Activated CD4-positive, alpha-beta T cell treated with anti-CD3 and anti-CD28 coated beads for 36 hours (primary cell): ENCODE measurements at regions of chr5 and their contacts with region 1.

Region 1: GRCh38 chr5:17189381-17190036 is 27.9 kb upstream of the BASP1 start:
- DNase-seq: peak; percentile 83
- ATAC-seq: peak; percentile 65
- H3K4me3 Mint-ChIP-seq: no peak overlapping the region
- H3K27ac Mint-ChIP-seq: no peak overlapping the region
- H3K4me1 Mint-ChIP-seq: no peaks in the 10 kb centered on the region
- H3K27me3 Mint-ChIP-seq: peaks cover 5% of the 10 kb centered on the region

Region 2: GRCh38 chr5:16160706-16161105 is 1028.8 kb before region 1 on chr5:
- CTCF ChIA-PET with region 1: interaction called, 4 read pairs
- POLR2A ChIA-PET with region 1: no interaction called
- intact Hi-C with region 1: loop called in 1 of 2 experiments (anchors 5 kb)
- DNase-seq: peak; percentile 35
- ATAC-seq: peak; percentile 63
- H3K4me3 Mint-ChIP-seq: no peak overlapping the region
- H3K27ac Mint-ChIP-seq: no peak overlapping the region
- H3K4me1 Mint-ChIP-seq: no peaks in the 10 kb centered on the region
- H3K27me3 Mint-ChIP-seq: no peaks in the 10 kb centered on the region

Region 3: DNA sequence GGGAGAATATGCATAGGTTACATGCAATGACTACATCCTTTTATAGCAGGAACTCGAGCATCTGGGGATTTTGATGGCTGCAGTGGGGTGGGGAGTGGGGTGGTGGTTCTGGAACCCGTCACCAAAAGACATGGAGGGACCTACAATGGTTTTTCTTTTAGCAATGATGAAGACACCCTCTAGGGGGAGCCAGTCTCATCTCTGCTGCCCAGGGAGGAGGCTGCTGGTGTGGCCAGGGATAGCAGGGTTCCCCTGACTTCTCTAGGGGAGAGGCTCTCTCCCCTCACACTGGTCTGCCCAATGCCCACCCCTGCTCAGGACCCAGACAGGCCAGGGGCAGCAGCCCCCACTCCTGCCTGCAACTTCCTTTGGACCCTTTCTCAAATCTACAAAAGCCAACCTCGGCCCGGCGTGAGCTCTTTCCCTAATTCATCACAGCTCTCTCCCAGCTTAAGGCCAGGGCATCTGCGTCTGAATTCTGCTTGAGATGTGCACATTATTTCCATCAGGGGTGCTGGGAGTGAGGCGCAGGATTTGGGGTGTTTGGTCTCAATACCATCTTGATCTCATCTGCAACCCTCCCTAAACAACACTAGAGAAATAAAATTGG is 499.2 kb before region 1 on chr5:
- CTCF ChIA-PET with region 1: interaction called, 3 read pairs
- POLR2A ChIA-PET with region 1: no interaction called
- intact Hi-C with region 1: loop called in 1 of 2 experiments (anchors 2 kb)
- DNase-seq: peak; percentile 51
- ATAC-seq: peak; percentile 80
- H3K4me3 Mint-ChIP-seq: no peak overlapping the region
- H3K27ac Mint-ChIP-seq: no peak overlapping the region
- H3K4me1 Mint-ChIP-seq: peaks cover 4% of the 10 kb centered on the region
- H3K27me3 Mint-ChIP-seq: peaks cover 4% of the 10 kb centered on the region

Region 4: GRCh38 chr5:16791036-16791705 is 398.3 kb before region 1 on chr5:
- CTCF ChIA-PET with region 1: interaction called, 25 read pairs
- POLR2A ChIA-PET with region 1: no interaction called
- intact Hi-C with region 1: loop called (anchors 1 kb)
- DNase-seq: peak; percentile 33
- ATAC-seq: peak; percentile 55
- H3K4me3 Mint-ChIP-seq: no peak overlapping the region
- H3K27ac Mint-ChIP-seq: no peak overlapping the region
- H3K4me1 Mint-ChIP-seq: peaks cover 6% of the 10 kb centered on the region
- H3K27me3 Mint-ChIP-seq: peaks cover 5% of the 10 kb centered on the region

Region 5: DNA sequence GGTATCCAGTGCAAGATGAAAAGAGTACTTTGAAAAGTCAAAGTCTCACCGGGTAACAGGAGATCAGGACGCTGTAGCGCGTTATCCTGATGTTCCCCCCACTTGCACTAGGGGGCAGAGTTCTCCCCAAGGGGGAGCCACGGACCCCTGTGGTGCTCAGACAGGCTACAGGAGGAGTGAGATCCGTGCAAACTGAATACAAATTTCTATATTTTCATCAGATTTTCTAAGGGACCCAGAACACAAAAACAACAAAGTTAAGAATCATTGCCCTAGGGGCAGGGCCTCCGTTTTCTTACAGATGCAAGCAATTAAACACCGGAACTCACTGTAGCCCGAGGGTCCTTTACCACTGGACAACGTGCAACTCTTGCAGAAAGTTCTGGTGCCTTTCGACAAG is 255.4 kb before region 1 on chr5:
- CTCF ChIA-PET with region 1: interaction called, 3 read pairs
- POLR2A ChIA-PET with region 1: no interaction called
- intact Hi-C with region 1: loop called (anchors 1 to 5 kb)
- DNase-seq: peak; percentile 71
- ATAC-seq: peak; percentile 51
- H3K4me3 Mint-ChIP-seq: no peak overlapping the region
- H3K27ac Mint-ChIP-seq: no peak overlapping the region
- H3K4me1 Mint-ChIP-seq: peaks cover 22% of the 10 kb centered on the region
- H3K27me3 Mint-ChIP-seq: peaks cover 69% of the 10 kb centered on the region

Region 6: GRCh38 chr5:17132444-17133083 is 56.9 kb before region 1 on chr5:
- CTCF ChIA-PET with region 1: interaction called, 15 read pairs
- POLR2A ChIA-PET with region 1: no interaction called
- intact Hi-C with region 1: no loop called
- DNase-seq: no peak
- ATAC-seq: no peak
- H3K4me3 Mint-ChIP-seq: no peak overlapping the region
- H3K27ac Mint-ChIP-seq: no peak overlapping the region
- H3K4me1 Mint-ChIP-seq: peaks cover 6% of the 10 kb centered on the region
- H3K27me3 Mint-ChIP-seq: peaks cover 23% of the 10 kb centered on the region

Region 7: GRCh38 chr5:17204133-17204489 is 14.6 kb after region 1 on chr5:
- CTCF ChIA-PET with region 1: interaction called, 11 read pairs
- POLR2A ChIA-PET with region 1: interaction called, 6 read pairs
- intact Hi-C with region 1: no loop called
- DNase-seq: no peak
- ATAC-seq: no peak
- H3K4me3 Mint-ChIP-seq: no peak overlapping the region
- H3K27ac Mint-ChIP-seq: no peak overlapping the region
- H3K4me1 Mint-ChIP-seq: no peaks in the 10 kb centered on the region
- H3K27me3 Mint-ChIP-seq: peaks cover 12% of the 10 kb centered on the region